ENCODE measurements at regions of chr18 and their contacts with region 1.

Region 1: GRCh38 chr18:2547477-2548087 is 23.7 kb downstream of the METTL4 start:
- DNase-seq: no peak
- ATAC-seq: no peak
- H3K4me3 ChIP-seq: no peak overlapping the region
- H3K27ac ChIP-seq: no peak overlapping the region
- H3K4me1 ChIP-seq: no peaks in the 10 kb centered on the region
- H3K27me3 ChIP-seq: no peaks in the 10 kb centered on the region

Region 2: DNA sequence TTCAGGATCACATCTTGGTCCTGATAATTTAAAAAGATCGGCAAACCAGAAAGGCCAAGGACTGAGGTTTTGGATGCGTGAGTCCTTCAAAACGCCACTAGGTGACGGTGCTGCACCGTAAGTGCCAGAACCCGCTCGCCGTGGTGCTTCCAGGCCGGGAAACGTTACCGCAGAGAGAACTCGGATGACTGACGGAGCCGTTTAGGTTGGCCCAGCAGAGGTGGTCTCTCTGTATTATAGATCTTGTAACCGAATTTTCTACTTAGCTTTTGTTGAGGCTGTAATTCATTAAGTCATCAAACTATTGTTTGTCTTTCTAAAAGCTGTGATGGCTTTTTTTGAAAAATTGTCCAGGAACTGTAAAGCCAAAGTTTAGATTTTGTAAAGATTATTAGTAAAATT is 1682.7 kb before region 1 on chr18:
- intact Hi-C with region 1: loop called (anchors 10 kb)
- DNase-seq: peak; percentile 75 to 87
- ATAC-seq: peak; percentile 85
- H3K4me3 ChIP-seq: no peak overlapping the region
- H3K27ac ChIP-seq: no peak overlapping the region
- H3K4me1 ChIP-seq: no peaks in the 10 kb centered on the region
- H3K27me3 ChIP-seq: no peaks in the 10 kb centered on the region

Region 3: DNA sequence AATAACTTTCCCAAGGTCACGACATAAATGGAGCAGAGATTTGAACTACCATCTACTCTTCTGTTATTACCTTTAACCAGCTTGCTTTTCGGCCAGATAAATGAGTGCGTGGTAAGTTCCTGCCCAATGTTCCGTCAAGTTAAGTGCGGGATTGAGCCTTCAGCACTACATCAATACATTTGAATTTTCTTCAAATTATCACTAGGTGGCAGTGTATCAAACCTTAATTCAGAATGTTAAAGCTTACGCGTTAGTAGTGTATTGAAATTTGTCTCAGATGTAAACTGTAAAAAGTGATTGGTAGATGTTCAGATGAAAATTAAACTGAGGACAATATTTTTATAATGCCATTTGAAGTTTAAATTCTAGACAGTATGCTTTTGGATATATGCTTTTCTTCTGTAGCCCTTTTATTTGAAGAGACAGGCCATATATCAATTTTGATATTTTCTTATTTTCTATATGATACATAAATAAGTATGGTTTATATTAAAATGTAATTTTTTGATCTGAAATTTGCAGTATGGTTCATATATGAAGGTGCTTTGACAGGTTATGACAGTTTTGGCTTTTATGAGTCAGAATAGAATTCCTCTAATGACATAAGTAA is 961.6 kb before region 1 on chr18:
- intact Hi-C with region 1: loop called (anchors 5 to 10 kb)
- DNase-seq: no peak
- ATAC-seq: no peak
- H3K4me3 ChIP-seq: no peak overlapping the region
- H3K27ac ChIP-seq: no peak overlapping the region
- H3K4me1 ChIP-seq: no peaks in the 10 kb centered on the region
- H3K27me3 ChIP-seq: no peaks in the 10 kb centered on the region

Region 4: GRCh38 chr18:2104620-2105462 is 442.7 kb before region 1 on chr18:
- intact Hi-C with region 1: loop called (anchors 10 kb)
- DNase-seq: no peak
- ATAC-seq: peak; percentile 50
- H3K4me3 ChIP-seq: no peak overlapping the region
- H3K27ac ChIP-seq: no peak overlapping the region
- H3K4me1 ChIP-seq: no peaks in the 10 kb centered on the region
- H3K27me3 ChIP-seq: no peaks in the 10 kb centered on the region

Region 5: DNA sequence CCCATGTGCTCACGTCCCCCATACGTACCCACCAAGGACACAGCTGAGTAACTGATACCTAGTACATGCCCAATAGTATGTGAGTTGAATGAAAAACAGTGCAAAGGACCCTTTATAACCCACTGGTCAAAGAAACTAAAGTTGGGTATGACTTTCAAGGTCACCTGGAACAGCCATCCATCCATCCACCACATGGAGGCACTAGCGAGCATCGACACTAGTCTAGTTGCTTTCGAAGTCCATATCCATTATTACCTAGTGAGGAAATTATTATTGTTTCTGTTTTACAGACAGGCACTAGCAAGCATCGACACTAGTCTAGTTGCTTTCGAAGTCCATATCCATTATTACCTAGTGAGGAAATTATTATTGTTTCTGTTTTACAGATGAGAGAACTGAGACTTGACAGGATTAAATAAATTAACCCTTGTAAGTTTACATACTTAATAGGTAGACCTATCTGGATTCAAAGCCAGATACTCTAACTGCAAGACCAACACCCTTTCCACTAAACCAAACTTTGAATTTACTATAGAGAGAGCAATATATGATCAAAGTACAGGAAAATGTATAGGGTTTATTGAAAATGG is 209.9 kb before region 1 on chr18:
- intact Hi-C with region 1: loop called (anchors 2 to 5 kb)
- DNase-seq: peak in 1 of 2 donors; percentile 58
- ATAC-seq: no peak
- H3K4me3 ChIP-seq: no peak overlapping the region
- H3K27ac ChIP-seq: no peak overlapping the region
- H3K4me1 ChIP-seq: no peaks in the 10 kb centered on the region
- H3K27me3 ChIP-seq: no peaks in the 10 kb centered on the region